ENCODE measurements at regions of chr18 and their contacts with region 1.

Region 1: DNA sequence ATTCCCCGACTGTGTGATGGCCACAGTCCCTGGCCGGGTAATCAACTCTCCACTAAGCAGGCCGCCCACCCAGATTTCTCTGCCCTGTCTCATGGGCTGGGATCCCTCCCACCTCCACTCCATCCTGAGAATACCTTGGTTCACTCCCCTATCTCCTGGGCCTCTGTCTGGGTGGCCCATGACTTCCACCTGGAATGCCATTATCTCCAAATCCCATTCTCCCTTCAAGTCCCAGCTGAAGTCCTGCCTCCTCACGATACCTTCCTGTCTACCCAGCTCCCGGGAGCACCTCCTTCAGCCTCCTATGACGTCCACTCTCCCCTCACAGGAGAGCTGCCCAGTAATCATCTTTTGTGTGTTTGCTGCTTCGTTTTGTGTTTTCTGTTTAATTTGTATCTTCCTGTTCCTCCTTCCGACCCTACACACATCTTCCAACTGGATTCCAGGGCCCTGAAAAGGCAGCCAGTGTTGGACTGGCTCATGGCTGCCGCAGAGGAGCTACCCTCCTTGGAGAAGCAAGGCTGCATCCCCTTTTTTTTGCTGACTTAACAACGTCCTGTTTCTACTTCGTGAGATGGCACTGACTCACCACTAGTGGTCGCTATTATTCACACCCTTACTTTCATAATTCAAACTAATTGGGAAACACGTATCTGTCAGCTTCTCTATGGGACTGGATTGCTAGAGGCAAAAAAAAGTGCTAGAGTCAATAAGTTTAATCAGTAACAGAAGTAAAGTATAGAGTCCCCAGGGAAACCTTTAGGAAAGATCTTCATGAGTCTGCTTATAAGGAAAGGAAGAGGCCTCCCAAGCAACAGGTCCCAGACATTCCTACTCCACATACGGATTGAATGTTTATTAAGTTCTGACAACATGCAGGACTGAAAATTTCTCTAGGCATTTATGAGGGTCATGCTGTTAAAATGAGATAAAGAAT is 171.9 kb upstream of the GATA6 start:
- DNase-seq: peak; percentile 76

Region 2: DNA sequence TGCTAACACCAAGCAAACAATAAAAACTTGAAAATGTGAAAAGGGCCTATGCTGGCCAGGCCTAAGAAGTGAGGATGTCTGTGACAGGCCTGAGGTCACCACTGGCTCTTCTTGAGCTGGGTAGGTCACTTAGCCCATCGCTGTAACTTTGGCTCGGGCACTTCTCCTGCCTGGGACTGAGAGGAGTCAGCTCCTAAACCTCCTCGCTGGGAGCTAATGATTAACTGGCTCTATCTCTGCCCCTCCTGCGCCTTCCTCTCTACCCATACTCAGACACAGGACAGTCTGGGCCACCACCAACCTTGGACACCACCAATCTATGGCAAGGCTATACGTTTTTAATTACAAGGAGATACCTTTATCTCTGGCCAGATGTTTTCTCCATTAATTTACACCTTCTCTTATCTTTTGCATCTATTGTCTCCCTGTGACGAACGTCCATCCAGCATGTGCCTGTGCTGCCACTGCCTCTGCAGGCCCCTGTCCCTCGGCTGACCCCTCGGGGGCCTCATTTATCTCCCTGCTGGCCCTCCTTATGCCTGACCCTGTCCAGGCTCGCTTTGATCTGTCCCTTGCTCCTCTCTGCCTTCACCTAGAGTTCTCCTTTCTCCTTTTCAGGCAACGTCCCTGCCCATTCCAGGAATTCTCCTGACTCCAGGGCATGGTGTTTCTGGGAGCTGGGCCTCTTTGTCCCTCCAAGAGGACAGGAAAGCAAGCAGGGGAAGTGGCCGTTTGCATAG is 22.8 kb after region 1 on chr18:
- CTCF ChIA-PET with region 1: interaction called, 10 read pairs
- POLR2A ChIA-PET with region 1: no interaction called
- DNase-seq: no peak

Measured in HEK293T (cell line).